Psoas muscle (tissue), 8 donors: ENCODE measurements at regions of chr17 and their contacts with region 1.

Region 1: DNA sequence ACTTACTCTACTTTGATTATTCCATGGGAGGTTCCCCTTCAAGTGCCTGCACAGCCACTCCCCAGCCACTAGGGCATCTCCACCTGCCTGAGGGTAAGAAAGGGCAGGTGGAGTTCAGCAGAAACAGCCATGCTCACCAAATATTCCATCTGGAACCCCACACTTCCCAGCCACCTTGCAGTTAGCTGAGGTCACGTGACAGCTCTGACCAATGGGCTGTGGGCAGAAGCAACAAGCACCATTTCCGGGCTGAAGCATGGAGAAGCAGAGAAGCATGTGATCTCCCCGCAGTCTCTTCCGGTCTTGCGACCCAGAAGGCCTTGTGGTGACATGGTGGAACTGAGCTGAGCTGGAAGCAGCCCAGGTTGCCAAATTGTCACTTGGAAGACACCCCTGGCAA is 108.6 kb downstream of the CCT6B start:
- DNase-seq: no peak
- ATAC-seq: no peak
- H3K4me3 ChIP-seq: no peak overlapping the region
- H3K27ac ChIP-seq: no peak overlapping the region
- H3K4me1 ChIP-seq: no peaks in the 10 kb centered on the region
- H3K27me3 ChIP-seq: no peaks in the 10 kb centered on the region
- CTCF ChIP-seq: no peak

Region 2: DNA sequence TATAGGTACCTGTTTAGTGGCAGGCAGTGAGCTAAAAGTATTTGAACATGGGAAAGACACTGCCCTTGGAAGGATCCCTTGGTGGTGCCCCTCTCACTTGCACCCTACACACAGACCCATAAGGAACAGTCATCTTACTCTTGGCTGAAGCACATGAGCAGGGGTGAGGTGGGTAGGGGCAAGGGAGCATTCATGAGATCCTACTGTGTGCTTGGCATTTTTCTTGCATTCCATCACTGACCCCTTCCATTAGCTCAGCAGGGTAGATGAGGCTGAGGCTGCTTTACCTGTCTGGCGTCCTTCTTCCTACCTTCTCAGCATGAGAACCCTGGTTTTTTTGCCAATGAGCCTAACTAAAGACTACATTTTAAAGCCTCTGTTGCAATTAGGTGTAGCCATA is 60.4 kb after region 1 on chr17:
- intact Hi-C with region 1: loop called in 1 of 2 experiments (anchors 10 kb)
- DNase-seq: no peak
- ATAC-seq: no peak
- H3K4me3 ChIP-seq: no peak overlapping the region
- H3K27ac ChIP-seq: no peak overlapping the region
- H3K4me1 ChIP-seq: no peaks in the 10 kb centered on the region
- H3K27me3 ChIP-seq: no peaks in the 10 kb centered on the region
- CTCF ChIP-seq: no peak